CD14-positive monocyte (primary cell): ENCODE measurements at regions of chr2 and their contacts with region 1.

Region 1: DNA sequence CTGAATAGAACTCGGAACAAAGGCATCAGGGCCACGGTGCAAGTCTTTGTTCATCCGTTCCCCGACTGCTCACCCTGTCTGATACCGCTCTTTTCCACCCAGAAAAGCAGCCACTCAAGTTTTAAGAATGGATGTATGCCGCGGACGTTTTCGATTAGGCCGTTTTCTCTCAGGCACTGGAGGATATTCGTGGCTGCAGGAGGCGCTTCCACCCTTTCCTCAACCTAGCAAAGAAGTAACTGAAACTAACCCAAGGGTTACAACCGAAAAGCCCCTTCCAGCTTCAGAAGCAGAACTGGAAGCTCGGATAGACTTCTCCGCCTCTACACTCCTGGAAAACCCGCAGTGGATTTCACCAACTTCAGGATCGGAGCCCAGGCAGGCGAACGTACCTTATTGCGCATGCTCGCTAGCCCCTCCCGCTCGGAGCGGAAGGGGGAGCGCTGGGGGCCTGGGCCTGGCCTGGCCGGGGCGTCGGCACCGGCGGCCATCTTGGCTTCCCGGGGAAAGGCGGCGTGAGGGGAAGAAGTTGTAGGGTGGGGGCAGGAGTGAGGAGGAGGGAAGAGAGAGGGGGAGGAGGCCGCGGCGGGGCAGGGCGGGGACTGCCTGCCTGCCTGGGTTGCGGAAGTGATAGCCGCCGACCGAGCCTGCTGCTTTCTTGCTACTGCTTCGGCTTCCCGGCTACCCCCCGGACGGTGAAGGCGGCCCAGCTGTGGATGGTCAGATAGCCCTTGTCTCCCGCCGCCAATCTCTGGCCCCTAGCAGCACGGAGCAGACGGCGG is at the start of gene ACTR3:
- DNase-seq: peak; percentile 98 to 100 (median 99)
- H3K4me3 ChIP-seq: peak within 1 kb of the TSS; percentile 89 to 96 (median 91)
- H3K4me3 Mint-ChIP-seq: peak within 1 kb of the TSS; percentile 96 to 100
- H3K27ac ChIP-seq: peak within 1 kb of the TSS; percentile 95 to 98
- H3K27ac Mint-ChIP-seq: peak within 1 kb of the TSS; percentile 96 to 100 (median 99)
- H3K4me1 ChIP-seq: peaks cover 69 to 77% of the 10 kb centered on the region in 2 donors
- H3K4me1 Mint-ChIP-seq: peaks cover 70% of the 10 kb centered on the region
- H3K27me3 ChIP-seq: no peaks in the 10 kb centered on the region
- H3K27me3 Mint-ChIP-seq: peaks cover 0 to 2% (median 0%) of the 10 kb centered on the region in 3 donors
- CTCF ChIP-seq: no peak
- polyA plus RNA-seq, gene ACTR3: 103 to 557 (median 464) TPM

Region 2: DNA sequence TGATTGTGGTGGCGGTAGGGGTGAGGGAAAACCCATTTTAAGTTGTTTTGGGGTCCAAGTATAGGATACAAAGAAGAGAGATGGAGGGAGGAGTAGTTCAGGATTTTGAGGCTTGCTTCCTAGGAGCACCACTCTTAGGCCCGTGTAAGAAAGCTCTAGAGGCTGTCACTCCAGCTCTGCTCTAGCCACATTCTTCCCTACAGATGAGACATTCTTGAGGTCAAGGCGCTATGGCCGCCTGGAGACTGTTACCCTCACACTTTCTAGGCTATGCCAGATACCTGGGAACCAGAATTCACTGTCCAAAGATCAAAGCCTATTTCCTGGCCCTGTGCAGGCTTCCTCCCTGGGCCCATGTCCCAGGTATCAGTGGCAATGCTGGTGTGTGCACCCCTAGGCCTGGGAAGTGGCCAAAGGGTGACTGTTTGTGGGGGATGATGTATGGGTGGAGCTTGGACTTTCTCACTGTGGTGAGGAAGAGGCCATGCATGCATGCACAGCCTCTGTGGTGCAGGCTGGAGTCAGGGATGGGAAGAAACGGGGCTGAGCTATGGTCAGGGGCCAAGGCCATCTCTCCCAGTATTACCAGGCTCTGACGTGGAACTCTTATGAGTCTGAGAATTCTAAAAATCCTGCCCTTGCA is 1414.7 kb before region 1 on chr2:
- intact Hi-C with region 1: no loop called
- DNase-seq: no peak
- H3K4me3 ChIP-seq: no peak overlapping the region
- H3K4me3 Mint-ChIP-seq: peak overlapping the region in 1 of 2 donors; percentile 13
- H3K27ac ChIP-seq: no peak overlapping the region
- H3K27ac Mint-ChIP-seq: peak overlapping the region in 1 of 7 donors; percentile 21
- H3K4me1 ChIP-seq: no peaks in the 10 kb centered on the region
- H3K4me1 Mint-ChIP-seq: no peaks in the 10 kb centered on the region
- H3K27me3 ChIP-seq: no peaks in the 10 kb centered on the region
- H3K27me3 Mint-ChIP-seq: peaks cover 0 to 3% (median 2%) of the 10 kb centered on the region in 3 donors
- CTCF ChIP-seq: no peak

Region 3: DNA sequence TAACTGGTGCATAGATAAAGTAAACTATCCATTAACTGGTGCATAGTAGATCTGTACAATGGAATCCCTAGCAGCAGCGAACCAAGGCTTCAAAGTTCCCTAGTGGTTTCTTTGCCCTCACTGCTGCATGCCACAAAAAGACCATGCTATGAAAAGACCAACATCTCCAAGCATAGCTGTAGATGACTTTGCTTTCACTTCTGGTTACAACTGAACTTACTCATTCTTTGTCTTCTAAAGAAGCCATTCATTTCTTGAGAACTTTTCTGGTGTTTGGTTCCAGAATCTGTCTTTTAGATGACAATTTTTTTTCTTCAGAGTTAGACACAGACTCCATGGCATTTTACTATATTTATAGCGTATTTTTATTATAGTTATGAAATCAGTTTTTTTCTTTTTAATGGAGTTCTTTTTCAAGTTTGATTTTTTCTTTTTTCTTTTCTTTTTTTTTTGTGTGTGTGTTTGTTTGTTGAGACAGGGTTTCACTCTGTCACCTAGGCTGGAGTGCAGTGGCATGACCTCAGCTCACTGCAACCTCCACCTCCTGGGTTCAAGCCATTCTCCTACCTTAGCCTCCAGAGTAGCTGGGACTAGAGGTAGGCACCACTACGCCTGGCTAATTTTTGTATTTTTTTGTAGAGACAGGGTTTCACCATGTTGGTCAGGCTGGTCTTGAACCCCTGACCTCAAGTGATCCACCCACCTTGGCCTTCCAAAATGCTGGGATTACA is 196.8 kb before region 1 on chr2:
- intact Hi-C with region 1: no loop called
- DNase-seq: peak in 1 of 3 donors; percentile 9
- H3K4me3 ChIP-seq: peak overlapping the region in 1 of 3 experiments; percentile 62
- H3K4me3 Mint-ChIP-seq: peak overlapping the region; percentile 67 to 83
- H3K27ac ChIP-seq: no peak overlapping the region
- H3K27ac Mint-ChIP-seq: peak overlapping the region in 2 of 7 donors; percentile 60 to 79
- H3K4me1 ChIP-seq: peaks cover 12 to 17% of the 10 kb centered on the region in 2 donors
- H3K4me1 Mint-ChIP-seq: peaks cover 24% of the 10 kb centered on the region
- H3K27me3 ChIP-seq: no peaks in the 10 kb centered on the region
- H3K27me3 Mint-ChIP-seq: no peaks in the 10 kb centered on the region
- CTCF ChIP-seq: no peak

Region 4: DNA sequence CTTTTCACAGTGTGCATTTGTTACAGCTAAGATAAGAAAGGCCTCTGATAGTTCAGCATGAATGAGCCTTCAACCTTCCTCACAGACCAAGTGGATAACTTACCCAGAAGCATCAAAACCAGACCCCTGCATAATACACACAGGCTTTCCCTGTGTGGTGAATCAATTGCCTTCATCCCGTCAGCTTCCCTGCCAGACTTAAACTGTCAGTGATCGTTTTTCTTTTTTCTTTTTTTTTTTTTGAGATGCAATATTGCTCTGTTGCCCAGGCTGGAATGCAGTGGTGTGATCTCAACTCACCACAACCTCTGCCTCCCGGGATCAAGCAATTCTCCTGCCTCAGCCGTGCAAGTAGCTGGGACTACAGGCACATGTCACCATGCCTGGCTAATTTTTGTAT is 112.7 kb before region 1 on chr2:
- intact Hi-C with region 1: no loop called
- DNase-seq: no peak
- H3K4me3 ChIP-seq: no peak overlapping the region
- H3K4me3 Mint-ChIP-seq: no peak overlapping the region
- H3K27ac ChIP-seq: no peak overlapping the region
- H3K27ac Mint-ChIP-seq: no peak overlapping the region
- H3K4me1 ChIP-seq: no peaks in the 10 kb centered on the region
- H3K4me1 Mint-ChIP-seq: peaks cover 4% of the 10 kb centered on the region
- H3K27me3 ChIP-seq: no peaks in the 10 kb centered on the region
- H3K27me3 Mint-ChIP-seq: peaks cover 2 to 11% (median 5%) of the 10 kb centered on the region in 3 donors
- CTCF ChIP-seq: no peak

Region 5: GRCh38 chr2:113858764-113859163 is 30.9 kb before region 1 on chr2:
- intact Hi-C with region 1: loop called (anchors 5 kb)
- DNase-seq: peak; percentile 51 to 92 (median 80)
- H3K4me3 ChIP-seq: peak overlapping the region in 1 of 3 experiments; percentile 52
- H3K4me3 Mint-ChIP-seq: peak overlapping the region in 1 of 2 donors; percentile 11
- H3K27ac ChIP-seq: peak overlapping the region; percentile 63 to 85
- H3K27ac Mint-ChIP-seq: peak overlapping the region; percentile 80 to 96 (median 92)
- H3K4me1 ChIP-seq: peaks cover 70 to 86% of the 10 kb centered on the region in 2 donors
- H3K4me1 Mint-ChIP-seq: peaks cover 70% of the 10 kb centered on the region
- H3K27me3 ChIP-seq: no peaks in the 10 kb centered on the region
- H3K27me3 Mint-ChIP-seq: peaks cover 0 to 1% (median 0%) of the 10 kb centered on the region in 3 donors
- CTCF ChIP-seq: no peak

Region 6: DNA sequence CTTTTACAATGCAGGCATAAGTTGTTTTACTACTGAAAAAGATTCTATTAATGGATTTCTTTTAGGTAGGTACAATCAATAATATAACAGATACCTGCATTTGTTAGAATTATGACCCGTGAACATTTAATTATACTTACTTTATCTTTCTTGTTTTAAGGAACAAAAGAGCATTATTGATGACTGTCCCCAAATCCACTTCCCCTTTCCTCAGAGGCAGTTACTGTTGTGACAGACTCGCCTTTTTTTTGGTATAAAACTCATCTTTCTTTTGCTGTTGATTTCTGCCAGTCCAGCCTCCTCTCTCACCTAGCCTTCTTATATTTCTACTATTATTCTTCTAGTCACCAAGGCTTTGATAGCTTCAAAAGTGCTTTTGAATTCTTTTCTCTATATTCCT is 12.3 kb after region 1 on chr2:
- intact Hi-C with region 1: no loop called
- DNase-seq: peak; percentile 67 to 83 (median 82)
- H3K4me3 ChIP-seq: peak overlapping the region in 1 of 3 experiments; percentile 34
- H3K4me3 Mint-ChIP-seq: no peak overlapping the region
- H3K27ac ChIP-seq: peak overlapping the region in 1 of 2 donors; percentile 71
- H3K27ac Mint-ChIP-seq: peak overlapping the region; percentile 66 to 91 (median 83)
- H3K4me1 ChIP-seq: peaks cover 55 to 97% of the 10 kb centered on the region in 2 donors
- H3K4me1 Mint-ChIP-seq: peaks cover 89% of the 10 kb centered on the region
- H3K27me3 ChIP-seq: no peaks in the 10 kb centered on the region
- H3K27me3 Mint-ChIP-seq: peaks cover 0 to 2% (median 0%) of the 10 kb centered on the region in 3 donors
- CTCF ChIP-seq: no peak